A549 (cell line): ENCODE measurements at regions of chr16 and their contacts with region 1.

Region 1: DNA sequence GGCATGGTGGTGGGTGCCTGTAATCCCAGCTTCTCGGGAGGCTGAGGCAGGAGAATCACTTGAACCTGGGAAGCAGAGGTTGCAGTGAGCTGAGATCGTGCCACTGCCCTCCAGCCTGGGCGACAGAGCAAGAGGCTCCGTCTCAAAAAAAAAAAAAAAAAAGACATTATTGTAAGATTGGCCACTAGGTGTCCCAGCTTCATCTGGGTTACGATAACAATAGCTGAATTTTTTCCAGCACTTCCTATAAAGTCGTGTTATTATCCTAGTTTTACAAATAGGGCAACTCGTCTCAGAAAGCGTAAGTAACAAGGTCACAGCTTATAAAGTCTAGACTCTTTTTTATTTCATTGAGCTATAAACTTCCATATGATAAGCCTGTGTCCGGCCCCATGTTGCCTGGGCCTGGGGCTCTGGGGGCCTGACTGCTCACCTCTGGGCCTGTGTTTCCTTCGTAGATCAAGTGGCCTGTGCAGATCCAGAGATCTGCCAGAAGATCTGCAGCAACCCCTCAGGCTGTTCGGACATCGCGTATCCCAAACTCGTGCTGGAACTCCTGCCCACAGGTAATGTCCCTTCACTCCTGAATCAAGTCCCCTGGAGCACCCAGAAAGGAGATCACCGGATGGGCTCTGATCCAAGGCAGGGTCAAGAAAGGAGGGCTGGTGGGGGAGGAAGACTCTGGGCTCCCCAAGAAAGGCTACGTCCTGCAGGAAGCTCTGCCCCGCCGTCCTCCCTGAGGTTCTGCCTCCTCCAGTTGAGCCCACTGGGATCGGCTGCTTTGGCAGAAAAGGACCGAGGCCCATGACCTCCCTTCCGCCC is 60.6 kb downstream of the SLC5A11 start:
- DNase-seq: peak in 1 of 2 experiments; percentile 35
- ATAC-seq: peak in 1 of 2 experiments; percentile 76; a peak in 3 of 6 replicates
- H3K4me3 ChIP-seq: no peak overlapping the region
- H3K27ac ChIP-seq: no peak overlapping the region
- H3K4me1 ChIP-seq: no peaks in the 10 kb centered on the region
- CTCF ChIP-seq: peak; percentile 37; the same call in 2 of the 3 replicates
- EP300 ChIP-seq: no peak
- POLR2A ChIP-seq: no peak
- RAD21 ChIP-seq: peak; percentile 30 to 51; a peak in 3 of 5 replicates

Region 2: GRCh38 chr16:24844101-24845030 is 62.0 kb before region 1 on chr16:
- CTCF ChIA-PET with region 1: interaction called, 12 read pairs
- POLR2A ChIA-PET with region 1: no interaction called
- DNase-seq: peak; percentile 78 to 93
- ATAC-seq: peak; percentile 72 to 75
- H3K4me3 ChIP-seq: no peak overlapping the region
- H3K27ac ChIP-seq: peak overlapping the region; percentile 85 to 92
- H3K4me1 ChIP-seq: peaks cover 91% of the 10 kb centered on the region
- CTCF ChIP-seq: no peak
- EP300 ChIP-seq: peak; percentile 59 to 61; a peak in 2 of 5 replicates
- POLR2A ChIP-seq: no peak
- RAD21 ChIP-seq: 0 out of 5 replicates have a peak, but pooled peaks have one; percentile 15 to 18

Region 3: GRCh38 chr16:24921229-24921628 is 14.8 kb after region 1 on chr16:
- CTCF ChIA-PET with region 1: interaction called, 18 read pairs
- POLR2A ChIA-PET with region 1: no interaction called
- DNase-seq: no peak
- ATAC-seq: no peak
- H3K4me3 ChIP-seq: no peak overlapping the region
- H3K27ac ChIP-seq: no peak overlapping the region
- H3K4me1 ChIP-seq: no peaks in the 10 kb centered on the region; the same call in 2 of the 3 replicates
- CTCF ChIP-seq: no peak
- EP300 ChIP-seq: no peak
- POLR2A ChIP-seq: no peak
- RAD21 ChIP-seq: no peak

Region 4: DNA sequence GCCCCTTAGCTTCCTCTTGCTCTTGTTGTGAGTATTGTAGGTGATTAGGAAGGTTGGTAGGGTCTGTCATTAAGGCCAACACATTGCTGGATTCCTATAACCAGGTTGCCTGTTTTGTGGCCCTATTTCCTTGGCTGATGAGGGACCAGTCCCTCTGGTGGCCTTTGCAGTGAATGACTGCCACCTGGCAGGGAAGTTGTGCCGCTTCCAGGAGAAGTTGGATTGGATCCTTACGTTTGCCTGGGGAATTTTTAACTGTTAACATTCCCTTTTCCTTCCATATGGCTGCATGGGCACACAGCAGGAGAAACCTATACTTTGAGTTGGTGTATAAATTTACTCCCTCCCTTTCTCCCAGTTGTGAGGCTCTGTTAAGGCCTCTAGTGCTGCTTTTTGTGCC is 237.5 kb after region 1 on chr16:
- CTCF ChIA-PET with region 1: no interaction called
- POLR2A ChIA-PET with region 1: no interaction called
- DNase-seq: peak; percentile 35 to 36
- ATAC-seq: peak in 1 of 2 experiments; percentile 75; a peak in 3 of 6 replicates
- H3K4me3 ChIP-seq: no peak overlapping the region
- H3K27ac ChIP-seq: no peak overlapping the region
- H3K4me1 ChIP-seq: no peaks in the 10 kb centered on the region
- CTCF ChIP-seq: peak; percentile 24; the same call in 2 of the 3 replicates
- EP300 ChIP-seq: no peak
- POLR2A ChIP-seq: no peak
- RAD21 ChIP-seq: peak; percentile 26 to 47; a peak in 2 of 5 replicates